H1 (cell line): ENCODE measurements at regions of chr9 and their contacts with region 1.

Region 1: DNA sequence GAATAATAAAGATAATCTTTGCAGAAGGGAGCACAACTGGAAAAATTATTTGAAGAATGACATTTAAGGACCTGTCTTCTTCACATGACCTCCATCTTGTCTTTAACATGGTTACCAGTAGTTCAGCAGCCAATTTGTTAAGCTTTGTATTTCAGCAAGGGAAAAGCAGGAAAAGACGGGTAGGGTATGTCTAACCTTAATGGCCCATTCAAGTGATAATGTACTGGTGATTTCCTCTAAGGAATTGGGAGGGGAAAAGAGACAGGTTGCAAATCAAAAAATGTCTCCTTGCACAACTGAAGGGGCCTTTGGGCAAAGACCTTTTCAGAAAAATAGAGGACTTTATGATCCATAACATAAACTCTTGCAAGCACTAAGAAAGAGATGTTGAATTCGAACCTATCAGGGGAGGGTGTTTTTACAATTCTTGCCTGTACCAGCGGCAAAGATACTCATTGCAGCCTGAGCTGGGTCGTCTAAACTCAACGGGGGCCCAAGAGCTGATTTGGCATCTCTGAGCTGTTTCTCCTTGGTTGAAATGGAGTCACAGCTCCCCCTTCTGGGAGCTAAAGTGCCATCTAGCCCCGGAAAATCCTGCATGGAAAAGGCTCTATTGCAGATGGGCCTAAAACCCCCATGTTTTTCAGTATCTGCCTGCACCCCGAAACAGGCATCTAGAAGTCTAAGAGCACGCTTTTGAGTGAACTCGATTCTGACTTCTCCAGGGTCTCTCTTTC is 3.8 kb downstream of the BRINP1 start:
- DNase-seq: peak; percentile 64 to 79
- H3K4me3 ChIP-seq: peak overlapping the region in 1 of 4 experiments; percentile 36; a peak in 1 of 8 replicates
- H3K27ac ChIP-seq: no peak overlapping the region
- H3K4me1 ChIP-seq: peaks cover 2 to 25% (median 8%) of the 10 kb centered on the region in 4 experiments; a peak in 6 of 7 replicates
- H3K27me3 ChIP-seq: peaks cover 0 to 8% (median 5%) of the 10 kb centered on the region in 4 experiments; a peak in 5 of 7 replicates
- CTCF ChIP-seq: peak; percentile 56 to 92 (median 92)
- EP300 ChIP-seq: no peak
- POLR2A ChIP-seq: no peak
- RAD21 ChIP-seq: peak; percentile 98

Region 2: DNA sequence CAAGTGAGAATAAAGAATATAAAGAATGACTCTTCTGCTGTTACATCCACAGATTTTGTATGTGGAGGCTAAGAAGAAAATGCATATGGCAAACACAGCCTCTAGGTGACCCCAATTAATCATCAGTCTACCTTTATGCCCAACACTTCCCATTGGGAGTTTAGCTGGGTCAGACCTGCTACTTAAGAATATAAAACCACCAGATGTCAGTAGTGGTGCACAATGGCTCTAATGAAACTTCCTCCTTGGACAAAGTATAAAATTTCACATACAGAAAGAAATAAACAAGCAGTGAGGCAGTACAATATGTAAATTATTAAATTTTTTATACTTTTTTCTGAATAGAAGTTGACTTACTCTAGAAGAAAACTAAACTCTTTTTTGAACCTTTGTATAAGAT is 536.1 kb before region 1 on chr9:
- CTCF ChIA-PET with region 1: interaction called, 18 read pairs
- POLR2A ChIA-PET with region 1: no interaction called
- DNase-seq: no peak
- H3K4me3 ChIP-seq: no peak overlapping the region
- H3K27ac ChIP-seq: no peak overlapping the region
- H3K4me1 ChIP-seq: no peaks in the 10 kb centered on the region
- H3K27me3 ChIP-seq: no peaks in the 10 kb centered on the region
- CTCF ChIP-seq: peak in 2 of 3 experiments; percentile 37 to 48; a peak in 3 of 4 replicates
- EP300 ChIP-seq: no peak
- POLR2A ChIP-seq: no peak
- RAD21 ChIP-seq: peak; percentile 81 to 82

Region 3: GRCh38 chr9:119284118-119284517 is 81.3 kb before region 1 on chr9:
- CTCF ChIA-PET with region 1: interaction called, 62 read pairs
- POLR2A ChIA-PET with region 1: interaction called, 3 read pairs
- DNase-seq: no peak
- H3K4me3 ChIP-seq: peak overlapping the region in 3 of 4 experiments; percentile 12 to 55 (median 14); a peak in 3 of 8 replicates
- H3K27ac ChIP-seq: no peak overlapping the region
- H3K4me1 ChIP-seq: peaks cover 4 to 21% (median 18%) of the 10 kb centered on the region in 4 experiments; a peak in 4 of 7 replicates
- H3K27me3 ChIP-seq: no peaks in the 10 kb centered on the region
- CTCF ChIP-seq: peak; percentile 54 to 89 (median 79)
- EP300 ChIP-seq: no peak
- POLR2A ChIP-seq: no peak
- RAD21 ChIP-seq: peak; percentile 83 to 87

Region 4: GRCh38 chr9:119289740-119290433 is 75.6 kb before region 1 on chr9:
- CTCF ChIA-PET with region 1: interaction called, 62 read pairs
- POLR2A ChIA-PET with region 1: interaction called, 3 read pairs
- DNase-seq: no peak
- H3K4me3 ChIP-seq: no peak overlapping the region
- H3K27ac ChIP-seq: no peak overlapping the region
- H3K4me1 ChIP-seq: peaks cover 0 to 7% (median 3%) of the 10 kb centered on the region in 4 experiments; a peak in 2 of 7 replicates
- H3K27me3 ChIP-seq: no peaks in the 10 kb centered on the region
- CTCF ChIP-seq: peak in 2 of 3 experiments; percentile 69 to 85; a peak in 3 of 4 replicates
- EP300 ChIP-seq: no peak
- POLR2A ChIP-seq: no peak
- RAD21 ChIP-seq: peak; percentile 83 to 88

Region 5: DNA sequence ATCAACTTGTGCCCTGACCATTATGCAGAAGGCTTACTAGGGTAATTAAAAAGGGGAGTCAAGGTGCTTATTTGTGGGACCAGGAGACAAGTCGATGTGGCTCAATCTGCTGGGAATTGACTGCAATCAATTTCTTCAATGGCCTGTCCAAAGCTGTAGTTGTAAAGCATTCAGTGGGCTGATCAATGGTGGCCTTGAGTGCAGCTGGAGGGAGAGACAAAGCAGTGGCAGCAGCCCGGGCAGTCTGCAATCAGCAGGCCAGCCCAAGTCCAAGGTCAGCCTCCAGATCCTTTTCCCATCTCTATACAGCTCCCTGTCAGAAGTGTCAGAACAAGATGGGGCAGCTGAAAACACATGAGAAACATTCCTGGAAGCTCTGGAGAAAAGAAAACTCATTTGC is 54.8 kb after region 1 on chr9:
- CTCF ChIA-PET with region 1: no interaction called
- POLR2A ChIA-PET with region 1: no interaction called
- DNase-seq: no peak
- H3K4me3 ChIP-seq: no peak overlapping the region
- H3K27ac ChIP-seq: no peak overlapping the region
- H3K4me1 ChIP-seq: peaks cover 0 to 3% (median 0%) of the 10 kb centered on the region in 4 experiments; a peak in 1 of 7 replicates
- H3K27me3 ChIP-seq: no peaks in the 10 kb centered on the region
- CTCF ChIP-seq: no peak
- EP300 ChIP-seq: no peak
- POLR2A ChIP-seq: no peak
- RAD21 ChIP-seq: no peak